Activated CD4-positive, alpha-beta T cell treated with anti-CD3 and anti-CD28 coated beads, Interleukin-2, amount 10 ng/mL, durations not matched to agents 24 days and 14 days (primary cell): ENCODE measurements at regions of chr4 and their contacts with region 1.

Region 1: GRCh38 chr4:109559983-109560686 is at the start of gene MCUB:
- DNase-seq: peak; percentile 98
- H3K4me3 Mint-ChIP-seq: peak within 1 kb of the TSS; percentile 95
- H3K27ac Mint-ChIP-seq: peak within 1 kb of the TSS; percentile 98
- H3K4me1 Mint-ChIP-seq: peaks cover 42% of the 10 kb centered on the region
- H3K27me3 Mint-ChIP-seq: no peaks in the 10 kb centered on the region
- total RNA-seq, gene MCUB: 43.6 and 46.4 TPM in 2 replicates

Region 2: DNA sequence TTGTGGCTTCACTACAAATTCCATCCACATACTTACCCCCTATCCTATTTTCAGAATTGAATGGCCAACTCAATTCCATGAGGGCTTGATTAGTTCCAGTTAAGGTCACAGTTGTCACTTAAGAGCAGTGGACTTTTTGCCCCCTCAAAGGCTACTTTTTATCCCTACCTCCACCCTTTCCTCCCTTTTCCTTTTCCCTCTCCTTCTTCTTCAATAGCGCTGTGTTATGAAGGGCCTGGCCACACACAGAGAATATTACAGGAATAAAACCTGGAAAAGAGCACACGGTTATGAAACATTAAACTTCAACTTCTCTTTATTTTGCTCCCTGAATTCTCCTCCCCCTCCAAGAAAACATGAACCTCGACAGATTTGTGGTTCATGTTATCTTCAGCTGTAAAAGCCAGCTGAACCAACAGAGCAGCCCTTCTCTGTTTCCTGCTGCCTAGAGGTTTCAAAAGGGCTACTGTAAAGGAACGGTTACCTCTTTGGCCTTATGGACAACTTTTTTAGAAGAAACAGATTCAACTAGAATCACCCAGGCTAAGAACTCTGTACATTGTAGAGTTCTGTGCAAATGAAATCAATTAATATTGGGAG is 1026.8 kb before region 1 on chr4:
- intact Hi-C with region 1: no loop called
- DNase-seq: no peak
- H3K4me3 Mint-ChIP-seq: peak overlapping the region; percentile 52
- H3K27ac Mint-ChIP-seq: peak overlapping the region; percentile 21
- H3K4me1 Mint-ChIP-seq: peaks cover 65% of the 10 kb centered on the region
- H3K27me3 Mint-ChIP-seq: no peaks in the 10 kb centered on the region

Region 3: GRCh38 chr4:109091727-109092409 is 468.3 kb before region 1 on chr4:
- intact Hi-C with region 1: no loop called
- DNase-seq: peak; percentile 22
- H3K4me3 Mint-ChIP-seq: no peak overlapping the region
- H3K27ac Mint-ChIP-seq: no peak overlapping the region
- H3K4me1 Mint-ChIP-seq: no peaks in the 10 kb centered on the region
- H3K27me3 Mint-ChIP-seq: peaks cover 19% of the 10 kb centered on the region

Region 4: GRCh38 chr4:109433205-109434006 is 126.7 kb before region 1 on chr4 and contains the start of gene SEC24B:
- intact Hi-C with region 1: loop called (anchors 1 kb)
- DNase-seq: peak; percentile 97
- H3K4me3 Mint-ChIP-seq: peak within 1 kb of the TSS; percentile 90
- H3K27ac Mint-ChIP-seq: peak within 1 kb of the TSS; percentile 85
- H3K4me1 Mint-ChIP-seq: peaks cover 50% of the 10 kb centered on the region
- H3K27me3 Mint-ChIP-seq: no peaks in the 10 kb centered on the region
- total RNA-seq, gene SEC24B: 32.5 and 33.6 TPM in 2 replicates

Region 5: DNA sequence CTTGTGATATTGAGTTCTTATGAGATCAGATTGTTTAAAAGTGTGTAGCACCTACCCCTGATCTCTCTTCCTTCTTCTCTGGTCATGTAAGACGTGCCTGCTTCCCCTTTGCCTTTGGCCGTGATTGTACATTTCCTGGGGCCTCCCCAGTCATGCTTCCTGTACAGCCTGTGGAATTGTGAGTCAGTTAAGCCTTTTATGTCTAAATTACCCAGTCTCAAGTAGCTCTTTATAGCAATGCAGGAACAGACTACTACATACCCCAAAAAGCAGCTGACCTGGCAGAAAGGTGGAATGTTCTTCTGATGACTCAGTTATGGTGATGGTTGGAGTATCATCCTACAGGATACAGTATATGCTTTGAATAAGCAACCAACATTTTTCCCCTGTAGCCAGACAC is 11.5 kb before region 1 on chr4:
- intact Hi-C with region 1: loop called (anchors 1 kb)
- DNase-seq: peak; percentile 63
- H3K4me3 Mint-ChIP-seq: peak overlapping the region; percentile 14
- H3K27ac Mint-ChIP-seq: peak overlapping the region; percentile 57
- H3K4me1 Mint-ChIP-seq: peaks cover 18% of the 10 kb centered on the region
- H3K27me3 Mint-ChIP-seq: no peaks in the 10 kb centered on the region

Region 6: DNA sequence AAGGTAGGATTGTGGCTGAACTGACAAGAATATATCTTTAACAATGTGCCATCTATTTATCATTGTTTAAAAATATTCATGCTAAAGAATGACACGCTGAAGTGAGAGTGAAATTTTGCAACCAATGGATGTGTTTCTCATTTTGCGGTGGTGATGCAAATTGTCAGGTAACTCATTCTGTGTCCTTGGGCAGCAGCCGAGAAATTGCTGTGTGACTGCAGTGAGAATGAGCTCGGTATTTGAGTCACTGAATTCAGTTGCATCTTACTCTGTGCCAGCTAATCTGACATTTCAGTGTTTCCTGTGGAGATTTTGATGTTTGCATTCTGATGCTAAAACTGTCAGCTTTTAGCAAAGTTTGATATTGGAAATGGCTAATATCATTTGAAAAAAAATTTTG is 28.0 kb after region 1 on chr4:
- intact Hi-C with region 1: loop called (anchors 1 kb)
- DNase-seq: peak; percentile 73
- H3K4me3 Mint-ChIP-seq: peak overlapping the region; percentile 4
- H3K27ac Mint-ChIP-seq: peak overlapping the region; percentile 6
- H3K4me1 Mint-ChIP-seq: peaks cover 54% of the 10 kb centered on the region
- H3K27me3 Mint-ChIP-seq: no peaks in the 10 kb centered on the region

Region 7: GRCh38 chr4:109648266-109648996 is 88.3 kb after region 1 on chr4:
- intact Hi-C with region 1: loop called (anchors 1 kb)
- DNase-seq: peak; percentile 75
- H3K4me3 Mint-ChIP-seq: peak overlapping the region; percentile 73
- H3K27ac Mint-ChIP-seq: peak overlapping the region; percentile 86
- H3K4me1 Mint-ChIP-seq: peaks cover 38% of the 10 kb centered on the region
- H3K27me3 Mint-ChIP-seq: no peaks in the 10 kb centered on the region

Region 8: DNA sequence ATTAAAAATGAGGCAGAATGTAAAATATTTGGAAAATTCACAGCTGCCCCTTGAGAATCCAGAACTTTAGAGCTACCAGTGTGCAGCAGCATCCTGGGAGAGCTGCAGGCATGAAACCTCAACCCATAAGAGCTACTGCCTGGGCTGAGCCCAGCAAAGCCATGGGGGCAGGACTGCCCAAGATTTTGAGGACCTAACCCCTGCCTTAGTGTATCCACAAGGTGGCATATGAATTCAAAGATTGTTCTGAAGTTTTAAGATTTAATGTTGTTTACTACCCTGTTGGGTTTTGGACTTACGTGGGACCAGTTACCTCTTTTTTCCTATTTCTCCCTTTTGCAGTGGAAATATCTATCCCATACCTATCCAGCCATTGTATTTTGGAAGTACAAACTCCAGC is 116.8 kb after region 1 on chr4:
- intact Hi-C with region 1: no loop called
- DNase-seq: no peak
- H3K4me3 Mint-ChIP-seq: no peak overlapping the region
- H3K27ac Mint-ChIP-seq: no peak overlapping the region
- H3K4me1 Mint-ChIP-seq: peaks cover 3% of the 10 kb centered on the region
- H3K27me3 Mint-ChIP-seq: no peaks in the 10 kb centered on the region

Region 9: GRCh38 chr4:109702950-109703663 is 143.0 kb after region 1 on chr4 and contains the start of gene CASP6:
- intact Hi-C with region 1: loop called (anchors 1 kb)
- DNase-seq: peak; percentile 94
- H3K4me3 Mint-ChIP-seq: peak within 1 kb of the TSS; percentile 94
- H3K27ac Mint-ChIP-seq: peak within 1 kb of the TSS; percentile 90
- H3K4me1 Mint-ChIP-seq: peaks cover 29% of the 10 kb centered on the region
- H3K27me3 Mint-ChIP-seq: no peaks in the 10 kb centered on the region
- total RNA-seq, gene CASP6: 19.3 and 23.6 TPM in 2 replicates

Region 10: DNA sequence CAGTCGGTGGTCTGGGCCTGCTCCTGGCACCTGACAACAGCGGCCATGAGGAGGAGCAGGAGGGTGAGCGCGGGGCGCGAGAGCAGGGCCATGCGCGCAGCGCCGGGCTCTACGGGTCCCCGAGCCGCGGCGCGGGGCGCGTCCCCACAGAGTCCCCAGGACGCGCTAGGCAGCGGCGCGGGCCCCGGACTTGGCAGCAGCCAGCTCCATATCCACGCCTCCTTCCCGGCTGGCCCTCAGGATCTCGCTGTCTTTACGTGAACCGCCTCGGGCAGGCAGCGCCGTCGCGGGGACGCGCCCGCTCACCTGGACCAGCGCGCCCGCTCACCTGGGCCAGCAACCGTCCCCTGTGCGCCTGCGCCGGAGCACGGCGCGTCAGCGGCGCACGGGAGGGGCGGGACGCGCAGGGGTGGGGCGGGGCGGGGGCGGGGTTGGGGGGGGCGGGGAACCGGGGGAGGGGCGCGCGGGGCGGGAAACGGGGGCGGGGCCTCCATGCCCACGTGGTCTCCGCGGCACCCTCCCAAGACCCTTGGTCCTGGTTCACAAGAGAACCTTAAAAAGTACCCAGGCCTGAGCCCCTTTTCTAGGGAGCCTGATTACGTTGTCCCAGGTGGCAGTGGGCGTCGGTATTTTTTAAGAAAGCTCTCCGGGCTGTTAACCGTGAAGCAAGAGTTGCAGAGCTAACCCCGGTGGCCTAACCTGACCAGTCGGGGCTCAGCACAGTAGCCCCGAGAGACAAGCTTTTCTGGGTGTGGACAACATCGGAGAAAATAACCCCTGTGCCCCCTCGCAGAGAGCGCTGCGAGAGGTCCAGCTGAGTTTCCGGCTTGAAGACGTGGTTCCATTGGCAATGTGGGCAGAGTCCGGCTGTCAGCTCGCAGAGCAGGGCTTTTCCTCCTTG is 169.8 kb after region 1 on chr4 and contains the start of gene PLA2G12A:
- intact Hi-C with region 1: loop called (anchors 2 kb)
- DNase-seq: peak; percentile 92
- H3K4me3 Mint-ChIP-seq: peak within 1 kb of the TSS; percentile 91
- H3K27ac Mint-ChIP-seq: peak within 1 kb of the TSS; percentile 78
- H3K4me1 Mint-ChIP-seq: peaks cover 16% of the 10 kb centered on the region
- H3K27me3 Mint-ChIP-seq: peaks cover 6% of the 10 kb centered on the region
- total RNA-seq, gene PLA2G12A: 9.0 and 11.4 TPM in 2 replicates